ENCODE measurements at regions of chr9 and their contacts with region 1.

Region 1: DNA sequence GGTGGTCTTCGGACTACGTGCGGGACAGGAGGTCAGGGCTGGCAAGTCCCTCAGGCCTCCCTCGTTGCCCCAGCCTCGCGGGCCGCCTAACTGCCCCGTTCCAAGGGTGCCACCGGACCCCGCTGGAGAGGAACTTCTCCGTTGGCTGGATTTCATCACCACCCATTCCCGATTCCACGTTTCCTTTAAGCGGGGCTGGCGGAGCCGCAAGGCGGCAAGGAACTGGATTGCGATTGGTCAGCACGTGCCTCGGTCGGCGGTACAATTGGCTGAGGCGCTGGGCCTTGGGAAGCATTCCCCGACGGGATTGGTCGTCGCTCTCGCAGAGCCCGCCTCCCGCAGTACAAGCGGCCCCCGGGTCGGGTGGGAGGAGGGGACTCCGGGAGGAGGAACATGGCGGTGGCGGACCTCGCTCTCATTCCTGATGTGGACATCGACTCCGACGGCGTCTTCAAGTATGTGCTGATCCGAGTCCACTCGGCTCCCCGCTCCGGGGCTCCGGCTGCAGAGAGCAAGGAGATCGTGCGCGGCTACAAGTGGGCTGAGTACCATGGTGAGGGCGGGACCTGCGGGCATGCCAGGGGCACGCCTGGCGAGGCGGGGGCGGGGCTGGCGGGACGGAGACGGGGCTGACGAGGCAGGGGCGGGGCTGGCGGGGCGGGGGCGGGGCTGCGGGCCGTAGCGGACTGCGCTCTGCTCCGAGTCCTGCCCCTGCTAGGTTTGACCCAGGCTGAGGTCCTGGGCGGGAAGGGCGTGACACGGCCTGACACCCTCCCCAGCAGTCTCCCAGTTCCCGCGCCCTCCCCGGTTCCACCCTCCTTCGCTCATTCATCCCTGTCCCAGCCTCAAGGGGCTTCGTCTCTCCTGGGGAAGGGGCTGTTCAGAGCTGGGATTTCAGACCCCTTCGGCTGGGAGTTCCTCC is at the start of gene PHPT1:
- DNase-seq: peak; percentile 97
- H3K4me3 Mint-ChIP-seq: peak within 1 kb of the TSS; percentile 94
- H3K27ac Mint-ChIP-seq: peak within 1 kb of the TSS; percentile 89
- H3K4me1 Mint-ChIP-seq: no peaks in the 10 kb centered on the region
- H3K27me3 Mint-ChIP-seq: peaks cover 6% of the 10 kb centered on the region
- total RNA-seq, gene PHPT1: 134 and 139 TPM in 2 replicates

Region 2: DNA sequence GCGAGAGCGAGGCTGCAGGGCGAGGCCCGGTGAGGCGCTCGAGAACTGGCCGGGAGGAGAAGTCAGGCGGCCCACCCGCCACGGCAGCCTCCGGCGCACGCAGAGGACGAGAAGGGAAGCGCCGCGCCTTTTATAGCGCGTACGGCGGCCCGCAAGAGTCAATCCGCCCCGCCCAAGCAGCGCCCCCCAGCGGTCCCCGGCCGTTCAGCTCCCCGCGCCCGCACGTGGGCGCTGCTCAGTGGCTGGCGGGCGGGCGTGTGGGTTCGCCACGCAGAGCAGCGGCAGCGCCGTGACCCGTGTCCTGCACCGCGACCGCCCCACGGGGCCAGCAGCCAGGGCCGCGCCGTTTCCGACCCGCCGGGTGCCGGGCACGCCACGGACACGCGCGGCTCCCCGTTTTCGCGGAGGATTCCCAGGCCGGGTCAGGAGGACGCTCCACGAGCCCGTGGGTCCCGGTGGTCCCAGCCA is 121.2 kb before region 1 on chr9:
- intact Hi-C with region 1: loop called (anchors 5 kb)
- DNase-seq: peak; percentile 89
- H3K4me3 Mint-ChIP-seq: peak overlapping the region; percentile 57
- H3K27ac Mint-ChIP-seq: no peak overlapping the region
- H3K4me1 Mint-ChIP-seq: peaks cover 25% of the 10 kb centered on the region
- H3K27me3 Mint-ChIP-seq: peaks cover 4% of the 10 kb centered on the region

Region 3: GRCh38 chr9:136865735-136866103 is 16.4 kb after region 1 on chr9:
- intact Hi-C with region 1: loop called (anchors 1 kb)
- DNase-seq: no peak
- H3K4me3 Mint-ChIP-seq: peak overlapping the region; percentile 89
- H3K27ac Mint-ChIP-seq: peak overlapping the region; percentile 82
- H3K4me1 Mint-ChIP-seq: peaks cover 10% of the 10 kb centered on the region
- H3K27me3 Mint-ChIP-seq: no peaks in the 10 kb centered on the region

Region 4: GRCh38 chr9:136902259-136902821 is 53.0 kb after region 1 on chr9:
- intact Hi-C with region 1: loop called (anchors 1 kb)
- DNase-seq: peak; percentile 88
- H3K4me3 Mint-ChIP-seq: peak overlapping the region; percentile 80
- H3K27ac Mint-ChIP-seq: peak overlapping the region; percentile 99
- H3K4me1 Mint-ChIP-seq: peaks cover 63% of the 10 kb centered on the region
- H3K27me3 Mint-ChIP-seq: no peaks in the 10 kb centered on the region

Region 5: DNA sequence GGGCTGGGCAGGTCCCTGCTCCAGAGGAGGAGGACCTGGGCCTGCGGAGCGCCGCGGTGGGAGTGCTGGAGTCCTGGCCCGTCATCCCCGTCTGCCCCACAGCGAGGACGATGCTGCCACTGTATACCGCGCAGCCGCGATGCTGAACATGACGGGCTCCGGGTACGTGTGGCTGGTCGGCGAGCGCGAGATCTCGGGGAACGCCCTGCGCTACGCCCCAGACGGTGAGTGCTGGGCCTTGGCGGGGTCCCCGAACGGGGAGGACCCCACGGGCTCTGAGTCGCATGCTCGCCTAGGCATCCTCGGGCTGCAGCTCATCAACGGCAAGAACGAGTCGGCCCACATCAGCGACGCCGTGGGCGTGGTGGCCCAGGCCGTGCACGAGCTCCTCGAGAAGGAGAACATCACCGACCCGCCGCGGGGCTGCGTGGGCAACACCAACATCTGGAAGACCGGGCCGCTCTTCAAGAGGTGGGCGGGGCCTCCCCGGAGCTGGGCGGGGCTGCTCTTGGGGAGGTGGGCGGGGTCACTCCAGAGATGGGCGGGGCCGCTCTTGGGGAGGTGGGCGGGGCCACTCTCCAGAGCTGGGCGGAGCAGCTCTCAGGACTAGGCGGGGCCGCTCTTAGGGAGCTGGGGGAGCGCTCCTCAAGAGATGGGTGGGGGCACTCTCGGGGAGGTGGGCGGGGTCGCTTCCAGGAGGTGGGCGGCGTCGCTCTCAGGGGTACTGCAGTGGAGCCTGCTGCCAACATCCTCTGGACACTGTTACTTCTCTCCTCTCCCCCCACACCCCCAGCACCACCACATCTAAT is 307.5 kb after region 1 on chr9:
- intact Hi-C with region 1: loop called (anchors 1 kb)
- DNase-seq: peak; percentile 43
- H3K4me3 Mint-ChIP-seq: peak overlapping the region; percentile 21
- H3K27ac Mint-ChIP-seq: no peak overlapping the region
- H3K4me1 Mint-ChIP-seq: no peaks in the 10 kb centered on the region
- H3K27me3 Mint-ChIP-seq: peaks cover 26% of the 10 kb centered on the region

Measured in activated T-helper 1 cell treated with anti-CD3 and anti-CD28 coated beads, Interleukin-12 subunit alpha, Interleukin-12 subunit beta, Interleukin-2, Interleukin-4 antibody, amounts not matched to agents 30 ng/mL and 10 ng/mL and 1 ng/mL, durations not matched to agents 14 hours and 24 hours and 36 hours (primary cell).